ENCODE measurements at regions of chr6 and their contacts with region 1.

Region 1: GRCh38 chr6:114304304-114304887 is 38.4 kb downstream of the HS3ST5 start:
- DNase-seq: no peak
- ATAC-seq: no peak

Region 2: DNA sequence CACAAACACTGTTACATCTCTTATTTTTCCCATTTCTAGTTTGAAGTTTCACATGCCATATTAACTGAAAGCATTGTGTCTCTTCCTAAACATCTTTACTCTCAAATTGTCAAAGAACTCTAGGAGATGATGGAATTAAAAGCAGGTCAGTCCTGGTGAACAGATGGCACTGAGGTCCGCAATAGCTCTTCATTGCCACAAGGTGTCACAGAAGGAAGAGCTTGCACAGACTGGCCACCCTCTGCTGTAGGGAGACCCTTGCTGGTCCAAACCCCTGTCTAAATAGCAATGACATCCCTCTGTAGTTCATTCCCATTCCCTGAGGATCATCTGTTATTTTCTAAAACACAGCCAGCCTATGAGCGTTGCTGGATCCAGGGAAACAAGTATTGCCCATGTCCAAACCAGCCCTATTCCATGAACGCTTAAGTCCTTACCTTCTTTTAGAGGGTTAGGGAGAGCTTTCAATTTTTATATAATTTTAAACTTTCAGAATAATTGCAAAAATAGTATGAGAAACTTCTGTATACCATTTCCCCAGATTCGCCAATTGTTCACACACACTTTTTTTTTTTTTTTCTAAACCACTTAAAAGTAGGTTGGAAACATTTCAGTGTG is 323.4 kb before region 1 on chr6:
- intact Hi-C with region 1: loop called (anchors 10 kb)
- DNase-seq: no peak
- ATAC-seq: no peak

Region 3: GRCh38 chr6:114049367-114049997 is 254.9 kb before region 1 on chr6:
- intact Hi-C with region 1: no loop called
- DNase-seq: no peak
- ATAC-seq: no peak

Region 4: DNA sequence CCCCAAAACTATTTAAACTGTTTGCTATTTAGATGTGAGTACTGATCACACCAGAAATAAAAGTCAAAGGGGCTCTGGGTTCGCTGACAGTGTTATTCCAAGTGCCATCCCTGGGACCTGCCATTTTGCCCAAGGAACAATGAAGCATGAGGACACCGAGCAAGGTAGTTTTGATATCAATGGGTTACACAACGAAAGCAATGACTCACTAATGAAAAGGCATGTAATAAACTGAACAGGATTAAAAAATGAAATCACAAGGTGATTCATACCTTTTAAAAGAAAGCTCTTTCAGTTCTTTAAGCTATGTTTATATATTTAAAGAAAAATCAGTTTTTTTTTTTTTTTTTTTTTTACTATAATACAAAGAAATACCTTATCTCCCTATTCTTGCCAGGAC is 63.6 kb before region 1 on chr6:
- intact Hi-C with region 1: no loop called
- DNase-seq: no peak
- ATAC-seq: no peak

Region 5: DNA sequence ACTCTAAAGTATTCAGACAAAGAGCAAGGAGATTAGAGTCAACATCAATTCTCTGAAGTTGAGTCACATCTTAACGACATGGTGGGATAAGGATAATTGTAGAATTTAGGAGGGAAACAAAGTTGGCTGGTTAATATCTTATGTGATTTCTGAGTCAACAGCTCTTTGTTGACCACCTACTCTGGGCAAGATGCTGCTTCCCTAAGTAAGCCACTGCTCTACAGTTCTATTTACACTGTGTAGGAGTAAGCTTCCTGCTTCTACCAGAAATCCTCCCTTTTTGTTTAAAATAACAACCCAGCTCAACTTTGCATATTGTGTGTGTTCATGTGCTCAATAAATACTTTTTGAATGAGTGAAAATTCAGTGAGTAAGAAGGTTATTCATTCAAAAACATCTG is 35.3 kb after region 1 on chr6:
- intact Hi-C with region 1: no loop called
- DNase-seq: no peak
- ATAC-seq: no peak

Region 6: DNA sequence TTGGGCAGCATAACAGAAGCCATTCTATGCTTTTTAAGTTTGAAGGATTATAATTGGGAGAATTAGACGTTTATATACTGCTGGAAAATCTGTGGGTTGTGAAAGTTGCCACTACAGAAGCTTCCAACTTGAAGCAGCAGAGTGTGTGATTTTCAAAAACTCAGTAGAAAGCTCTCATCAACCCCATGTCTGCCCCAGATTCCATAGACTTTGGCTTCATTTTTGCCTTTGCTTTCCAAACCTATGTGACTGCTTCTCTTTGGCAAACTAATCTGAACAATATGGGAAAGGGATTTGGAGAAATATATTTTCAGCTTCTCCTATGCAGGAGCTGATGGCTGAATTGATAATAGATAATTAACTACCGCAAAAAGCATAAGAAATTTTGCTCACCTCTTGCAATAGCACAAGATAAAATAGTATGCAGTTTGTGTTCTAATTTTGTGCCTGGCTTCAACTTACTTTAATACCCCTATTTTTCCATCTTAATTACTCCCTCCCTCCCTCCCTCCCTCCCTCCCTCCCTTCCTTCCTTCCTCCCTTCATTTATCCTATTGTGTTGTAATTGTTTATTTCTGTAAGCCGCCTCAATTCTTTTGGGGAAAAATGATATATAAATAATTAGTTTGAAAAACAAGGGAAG is 252.6 kb after region 1 on chr6:
- intact Hi-C with region 1: no loop called
- DNase-seq: no peak
- ATAC-seq: no peak